Mammary epithelial cell (primary cell): ENCODE measurements at regions of chr2 and their contacts with region 1.

Region 1: GRCh38 chr2:101883863-101884262 is 107.9 kb upstream of the IL1R2 start:
- DNase-seq: peak; percentile 57
- H3K4me3 ChIP-seq: no peak overlapping the region
- H3K27ac ChIP-seq: no peak overlapping the region
- H3K4me1 ChIP-seq: peaks cover 22% of the 10 kb centered on the region
- H3K27me3 ChIP-seq: no peaks in the 10 kb centered on the region
- CTCF ChIP-seq: peak; percentile 67 to 74

Region 2: GRCh38 chr2:99926986-99927385 is 1956.9 kb before region 1 on chr2:
- CTCF ChIA-PET with region 1: no interaction called
- dilution Hi-C with region 1: no loop called
- in situ Hi-C with region 1: no loop called
- intact Hi-C with region 1: no loop called
- DNase-seq: peak; percentile 83
- H3K4me3 ChIP-seq: no peak overlapping the region
- H3K27ac ChIP-seq: no peak overlapping the region
- H3K4me1 ChIP-seq: peaks cover 10% of the 10 kb centered on the region
- H3K27me3 ChIP-seq: no peaks in the 10 kb centered on the region
- CTCF ChIP-seq: no peak

Region 3: DNA sequence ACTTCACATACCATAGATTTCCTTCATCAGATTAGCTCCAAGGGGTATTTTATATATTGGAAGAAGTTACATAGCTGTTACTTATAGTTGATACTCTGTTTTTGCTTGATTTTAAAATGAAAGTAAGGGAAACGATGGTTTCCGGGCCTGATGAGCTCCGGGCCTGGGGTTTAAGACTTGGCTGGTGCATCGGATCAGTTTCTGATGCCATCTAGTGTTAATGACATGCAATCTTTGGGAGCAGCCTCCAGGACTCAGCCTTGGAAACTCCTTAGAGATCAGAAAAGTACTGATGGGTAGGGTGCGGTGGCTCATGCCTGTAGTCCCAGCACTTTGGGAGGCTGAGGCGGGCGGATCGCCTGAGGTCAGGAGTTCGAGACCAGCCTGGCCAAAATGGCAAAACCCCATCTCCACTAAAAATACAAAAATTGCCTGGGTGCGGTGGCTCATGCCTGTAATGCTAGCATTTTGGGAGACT is 678.3 kb before region 1 on chr2:
- CTCF ChIA-PET with region 1: no interaction called
- dilution Hi-C with region 1: no loop called
- in situ Hi-C with region 1: no loop called
- intact Hi-C with region 1: no loop called
- DNase-seq: peak; percentile 82
- H3K4me3 ChIP-seq: peak overlapping the region; percentile 10 to 55 (median 42)
- H3K27ac ChIP-seq: peak overlapping the region; percentile 48
- H3K4me1 ChIP-seq: peaks cover 8% of the 10 kb centered on the region
- H3K27me3 ChIP-seq: no peaks in the 10 kb centered on the region
- CTCF ChIP-seq: peak; percentile 60 to 70

Region 4: DNA sequence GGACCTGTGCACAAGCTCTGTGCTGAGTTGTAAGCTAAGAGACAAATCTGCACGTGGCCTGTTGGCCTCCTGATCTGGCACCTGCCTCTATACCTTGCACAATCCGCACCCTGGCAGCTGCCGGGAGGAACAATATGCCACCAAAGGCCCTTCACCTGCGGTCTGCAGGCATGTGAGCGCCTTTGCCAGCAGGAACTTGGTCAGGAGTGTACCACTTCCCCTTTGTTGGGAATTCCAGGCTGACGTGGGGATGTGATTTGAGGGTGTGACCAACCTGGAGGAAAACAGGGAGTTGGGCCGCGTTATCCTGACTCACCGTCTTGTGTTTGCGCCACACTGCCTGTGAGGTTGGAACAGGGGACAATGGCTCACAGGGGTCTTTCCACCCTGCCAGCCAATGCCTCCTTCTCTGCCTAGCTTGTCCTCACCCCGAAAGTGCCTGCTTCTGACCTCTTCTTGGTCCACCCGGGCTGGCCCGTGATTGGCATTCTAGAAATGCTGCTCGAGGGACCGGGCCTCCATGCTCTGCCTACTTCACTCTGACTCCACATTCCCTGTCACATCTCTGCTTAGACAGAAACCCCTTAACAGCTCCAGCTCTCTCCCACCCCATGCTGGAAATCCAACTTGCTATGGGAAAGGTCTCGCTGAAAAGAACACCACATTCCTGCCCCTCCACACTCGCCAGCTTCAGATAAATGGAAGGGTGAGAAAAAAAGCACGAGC is 253.5 kb before region 1 on chr2:
- CTCF ChIA-PET with region 1: no interaction called
- dilution Hi-C with region 1: no loop called
- in situ Hi-C with region 1: no loop called
- intact Hi-C with region 1: no loop called
- DNase-seq: peak; percentile 99
- H3K4me3 ChIP-seq: no peak overlapping the region
- H3K27ac ChIP-seq: peak overlapping the region; percentile 68
- H3K4me1 ChIP-seq: peaks cover 13% of the 10 kb centered on the region
- H3K27me3 ChIP-seq: no peaks in the 10 kb centered on the region
- CTCF ChIP-seq: no peak

Region 5: GRCh38 chr2:101873543-101873942 is 10.3 kb before region 1 on chr2:
- CTCF ChIA-PET with region 1: interaction called, 19 read pairs
- dilution Hi-C with region 1: no loop called
- in situ Hi-C with region 1: no loop called
- intact Hi-C with region 1: no loop called
- DNase-seq: no peak
- H3K4me3 ChIP-seq: no peak overlapping the region
- H3K27ac ChIP-seq: no peak overlapping the region
- H3K4me1 ChIP-seq: no peaks in the 10 kb centered on the region
- H3K27me3 ChIP-seq: no peaks in the 10 kb centered on the region
- CTCF ChIP-seq: peak in 1 of 2 donors; percentile 27

Region 6: GRCh38 chr2:101983928-101984327 is 100.1 kb after region 1 on chr2:
- CTCF ChIA-PET with region 1: interaction called, 5 read pairs
- dilution Hi-C with region 1: no loop called
- in situ Hi-C with region 1: loop called in 1 of 2 experiments (anchors 10 kb)
- intact Hi-C with region 1: loop called (anchors 1 kb)
- DNase-seq: peak; percentile 8
- H3K4me3 ChIP-seq: no peak overlapping the region
- H3K27ac ChIP-seq: no peak overlapping the region
- H3K4me1 ChIP-seq: peaks cover 73% of the 10 kb centered on the region
- H3K27me3 ChIP-seq: no peaks in the 10 kb centered on the region
- CTCF ChIP-seq: peak; percentile 39 to 69

Region 7: DNA sequence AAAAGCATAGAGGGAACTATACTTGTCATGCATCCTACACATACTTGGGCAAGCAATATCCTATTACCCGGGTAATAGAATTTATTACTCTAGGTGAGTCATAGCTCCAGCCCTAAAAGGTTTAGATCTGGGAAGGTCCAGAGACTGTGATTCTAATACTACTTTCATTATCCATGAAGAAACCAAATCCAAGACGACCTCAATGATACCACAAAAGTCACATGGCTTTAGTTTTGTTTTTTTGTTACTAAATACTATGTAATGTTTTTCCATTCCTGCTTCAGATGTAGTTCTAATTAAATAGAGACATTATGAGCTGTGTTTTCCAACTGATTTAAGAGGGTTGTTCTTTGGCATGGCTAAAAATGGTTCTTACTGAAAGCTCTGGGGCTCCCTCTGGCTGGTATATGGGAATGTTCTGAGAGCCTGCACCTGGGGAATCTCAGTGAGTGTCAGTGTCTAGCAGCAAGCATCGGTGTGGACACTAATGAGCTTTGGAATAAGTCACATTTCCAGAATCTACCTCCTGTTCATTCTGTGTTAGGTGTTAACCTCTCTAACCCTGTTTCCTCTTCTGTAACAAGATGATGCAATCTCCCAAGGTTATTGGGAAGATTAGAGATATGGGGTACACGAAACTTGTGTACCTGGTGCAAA is 282.5 kb after region 1 on chr2:
- CTCF ChIA-PET with region 1: interaction called, 9 read pairs
- dilution Hi-C with region 1: no loop called
- in situ Hi-C with region 1: no loop called
- intact Hi-C with region 1: loop called (anchors 1 kb)
- DNase-seq: peak; percentile 66
- H3K4me3 ChIP-seq: no peak overlapping the region
- H3K27ac ChIP-seq: peak overlapping the region; percentile 17
- H3K4me1 ChIP-seq: peaks cover 4% of the 10 kb centered on the region
- H3K27me3 ChIP-seq: no peaks in the 10 kb centered on the region
- CTCF ChIP-seq: peak; percentile 60 to 76

Region 8: DNA sequence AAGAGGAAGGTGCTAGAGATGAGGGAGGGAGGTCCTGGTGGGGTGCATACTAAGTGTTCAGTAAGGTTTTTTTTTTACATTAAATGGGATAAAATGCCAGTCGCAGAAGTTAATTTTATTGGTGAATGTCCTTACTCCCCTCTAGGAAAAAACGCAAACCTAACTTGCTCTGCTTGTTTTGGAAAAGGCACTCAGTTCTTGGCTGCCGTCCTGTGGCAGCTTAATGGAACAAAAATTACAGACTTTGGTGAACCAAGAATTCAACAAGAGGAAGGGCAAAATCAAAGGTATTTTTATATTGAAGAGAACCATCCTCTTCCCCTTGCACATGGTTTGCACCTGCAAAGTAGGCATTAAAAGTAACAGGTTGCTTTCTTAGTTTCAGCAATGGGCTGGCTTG is 459.0 kb after region 1 on chr2:
- CTCF ChIA-PET with region 1: no interaction called
- dilution Hi-C with region 1: no loop called
- in situ Hi-C with region 1: no loop called
- intact Hi-C with region 1: loop called (anchors 5 kb)
- DNase-seq: no peak
- H3K4me3 ChIP-seq: no peak overlapping the region
- H3K27ac ChIP-seq: no peak overlapping the region
- H3K4me1 ChIP-seq: no peaks in the 10 kb centered on the region
- H3K27me3 ChIP-seq: no peaks in the 10 kb centered on the region
- CTCF ChIP-seq: peak; percentile 7 to 60

Region 9: GRCh38 chr2:102449370-102449974 is 565.6 kb after region 1 on chr2:
- CTCF ChIA-PET with region 1: no interaction called
- dilution Hi-C with region 1: no loop called
- in situ Hi-C with region 1: no loop called
- intact Hi-C with region 1: loop called (anchors 5 kb)
- DNase-seq: peak; percentile 28
- H3K4me3 ChIP-seq: no peak overlapping the region
- H3K27ac ChIP-seq: no peak overlapping the region
- H3K4me1 ChIP-seq: no peaks in the 10 kb centered on the region
- H3K27me3 ChIP-seq: no peaks in the 10 kb centered on the region
- CTCF ChIP-seq: peak; percentile 57 to 68